Heart right ventricle (tissue), 16 donors: ENCODE measurements at regions of chr12 and their contacts with region 1.

Region 1: DNA sequence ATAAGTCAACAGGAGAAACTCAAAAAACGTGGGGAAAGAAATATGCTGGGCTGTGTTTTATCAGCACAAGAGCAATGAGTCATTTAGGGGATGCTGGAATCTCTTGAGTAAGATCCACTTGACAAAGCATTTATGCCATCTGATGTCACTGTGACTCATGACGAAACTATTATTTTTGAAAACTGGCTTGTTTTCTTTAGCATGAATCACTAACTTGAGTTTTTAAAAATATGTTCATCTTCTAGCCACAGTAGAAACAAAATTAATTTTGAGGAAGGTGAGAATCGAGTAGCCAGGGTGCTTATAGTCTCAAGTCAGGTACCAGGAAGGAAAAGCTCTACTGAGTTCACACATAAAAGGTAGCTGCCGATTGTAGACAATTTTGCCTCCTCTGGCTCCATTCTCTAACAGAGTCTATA is 456.2 kb upstream of the MGAT4C start:
- DNase-seq: no peak
- ATAC-seq: peak in 1 of 8 donors; percentile 69
- H3K4me3 ChIP-seq: no peak overlapping the region
- H3K27ac ChIP-seq: peak overlapping the region in 1 of 10 donors; percentile 27
- H3K4me1 ChIP-seq: no peaks in the 10 kb centered on the region
- H3K27me3 ChIP-seq: no peaks in the 10 kb centered on the region
- CTCF ChIP-seq: no peak

Region 2: GRCh38 chr12:85484387-85484786 is 1228.0 kb before region 1 on chr12:
- intact Hi-C with region 1: loop called in 1 of 10 experiments (anchors 5 kb)
- DNase-seq: no peak
- ATAC-seq: no peak
- H3K4me3 ChIP-seq: no peak overlapping the region
- H3K27ac ChIP-seq: no peak overlapping the region
- H3K4me1 ChIP-seq: no peaks in the 10 kb centered on the region
- H3K27me3 ChIP-seq: no peaks in the 10 kb centered on the region
- CTCF ChIP-seq: no peak

Region 3: DNA sequence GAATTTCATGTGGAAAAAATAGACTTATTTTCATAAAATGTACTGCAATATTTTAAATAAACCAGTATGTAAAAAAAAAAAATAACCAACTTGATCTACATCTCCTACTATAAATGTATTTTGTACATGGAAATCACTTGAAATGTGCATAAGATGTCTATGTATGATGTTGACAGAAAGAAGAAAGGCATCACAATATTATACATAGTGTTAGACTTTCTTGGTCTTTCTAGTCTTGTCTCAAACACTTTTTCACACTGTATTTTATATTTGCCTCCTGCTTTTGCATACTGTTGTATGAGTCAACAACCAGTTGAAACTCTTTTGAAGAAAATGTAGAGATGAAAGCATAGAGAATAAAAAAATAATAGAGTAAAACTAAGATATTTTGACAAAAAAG is 103.8 kb before region 1 on chr12:
- intact Hi-C with region 1: no loop called
- DNase-seq: no peak
- ATAC-seq: no peak
- H3K4me3 ChIP-seq: no peak overlapping the region
- H3K27ac ChIP-seq: no peak overlapping the region
- H3K4me1 ChIP-seq: no peaks in the 10 kb centered on the region
- H3K27me3 ChIP-seq: no peaks in the 10 kb centered on the region
- CTCF ChIP-seq: no peak